GM18951 (cell line): ENCODE measurements at regions of chr21 and their contacts with region 1.

Region 1: DNA sequence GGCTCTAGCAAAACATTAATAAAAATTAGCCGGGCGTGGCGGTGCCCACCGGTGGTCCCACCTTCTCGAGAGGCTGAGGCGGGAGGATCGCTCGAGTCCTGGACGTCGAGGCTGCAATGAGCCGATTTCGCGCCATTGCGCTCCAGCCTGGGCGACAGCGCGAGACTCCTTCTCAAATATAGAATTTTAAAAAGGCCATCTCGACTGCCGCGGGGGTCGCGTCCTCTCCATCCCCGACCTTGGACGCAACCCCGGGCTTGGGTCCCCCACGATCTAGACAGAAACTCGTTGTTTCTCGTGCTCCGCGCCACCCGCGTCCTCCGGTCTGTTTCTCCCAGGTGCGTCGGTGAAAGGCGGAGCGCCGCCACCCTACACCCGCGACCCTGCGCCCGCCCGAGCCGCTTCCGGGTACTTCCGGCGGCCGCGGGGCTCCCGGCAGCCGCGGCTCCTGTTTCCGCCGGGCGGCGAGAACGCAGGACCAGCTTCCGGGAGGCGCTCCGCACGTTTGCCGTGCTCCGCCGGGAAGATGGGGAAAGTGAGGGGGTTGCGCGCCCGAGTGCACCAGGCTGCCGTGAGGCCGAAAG is at the start of gene SLX9:
- POLR2A ChIP-seq: peak; percentile 89

Region 2: DNA sequence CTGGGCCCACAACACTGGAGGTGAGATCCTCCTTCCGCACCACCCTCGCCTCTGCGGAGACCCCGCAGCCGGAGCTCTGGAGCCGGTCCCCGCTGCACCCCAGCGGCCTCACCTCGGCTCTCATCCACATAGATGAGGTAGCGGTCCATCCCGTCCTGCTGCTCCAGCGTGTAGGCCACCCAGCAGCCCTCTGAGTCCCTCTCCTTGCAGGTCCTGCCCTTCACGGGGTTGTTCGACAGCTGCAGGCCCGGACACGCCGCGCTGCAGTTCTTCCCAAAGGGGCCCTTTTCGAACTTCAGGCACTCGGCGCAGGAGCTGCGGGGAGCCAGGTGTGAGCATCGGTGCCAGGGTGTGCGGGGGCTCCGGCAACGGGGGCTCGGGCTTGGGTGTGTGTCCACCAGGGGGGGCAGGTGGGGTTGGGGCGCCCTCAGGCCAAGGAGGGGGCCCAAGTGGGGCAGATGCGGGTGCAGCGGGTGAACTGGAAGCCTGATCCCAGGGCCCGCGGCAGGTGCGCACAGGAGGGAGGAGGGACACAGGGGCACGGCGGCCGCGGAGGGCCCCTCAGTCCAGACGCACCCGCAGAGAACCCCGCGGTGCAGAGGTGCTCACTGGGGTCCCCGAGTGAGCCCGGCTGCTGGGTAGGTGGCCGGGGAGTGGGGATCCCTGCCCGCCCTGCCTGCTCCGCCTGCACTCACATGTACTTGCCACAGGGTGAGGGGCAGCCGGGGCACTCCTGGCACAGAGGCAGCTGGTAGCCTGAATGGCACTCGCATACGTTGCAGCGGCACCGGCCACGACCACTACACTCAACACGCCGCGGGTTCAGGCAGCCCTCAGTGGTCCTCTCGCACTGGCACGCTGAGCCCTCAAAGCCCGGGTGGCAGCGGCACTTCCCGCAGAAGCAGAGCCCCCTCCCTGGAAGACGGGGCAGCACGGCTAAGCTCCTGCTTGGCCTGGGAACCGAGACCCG is 50.8 kb before region 1 on chr21:
- in situ Hi-C with region 1: loop called (anchors 5 kb)
- POLR2A ChIP-seq: no peak

Region 3: GRCh38 chr21:45129189-45129923 is 189.7 kb after region 1 on chr21:
- in situ Hi-C with region 1: loop called (anchors 10 kb)
- POLR2A ChIP-seq: no peak